PC-9 (cell line): ENCODE measurements at regions of chr14 and their contacts with region 1.

Region 1: GRCh38 chr14:78598041-78598920 is 428.1 kb downstream of the NRXN3 start:
- DNase-seq: peak in 1 of 2 experiments; percentile 29
- H3K4me3 ChIP-seq: no peak overlapping the region
- H3K27ac ChIP-seq: no peak overlapping the region
- H3K4me1 ChIP-seq: no peaks in the 10 kb centered on the region
- H3K27me3 ChIP-seq: no peaks in the 10 kb centered on the region
- CTCF ChIP-seq: peak; percentile 89

Region 2: GRCh38 chr14:78448164-78449094 is 149.9 kb before region 1 on chr14:
- CTCF ChIA-PET with region 1: no interaction called
- POLR2A ChIA-PET with region 1: no interaction called
- intact Hi-C with region 1: loop called (anchors 1 kb)
- DNase-seq: peak; percentile 25 to 37
- H3K4me3 ChIP-seq: no peak overlapping the region
- H3K27ac ChIP-seq: no peak overlapping the region
- H3K4me1 ChIP-seq: no peaks in the 10 kb centered on the region
- H3K27me3 ChIP-seq: no peaks in the 10 kb centered on the region
- CTCF ChIP-seq: peak; percentile 71

Region 3: DNA sequence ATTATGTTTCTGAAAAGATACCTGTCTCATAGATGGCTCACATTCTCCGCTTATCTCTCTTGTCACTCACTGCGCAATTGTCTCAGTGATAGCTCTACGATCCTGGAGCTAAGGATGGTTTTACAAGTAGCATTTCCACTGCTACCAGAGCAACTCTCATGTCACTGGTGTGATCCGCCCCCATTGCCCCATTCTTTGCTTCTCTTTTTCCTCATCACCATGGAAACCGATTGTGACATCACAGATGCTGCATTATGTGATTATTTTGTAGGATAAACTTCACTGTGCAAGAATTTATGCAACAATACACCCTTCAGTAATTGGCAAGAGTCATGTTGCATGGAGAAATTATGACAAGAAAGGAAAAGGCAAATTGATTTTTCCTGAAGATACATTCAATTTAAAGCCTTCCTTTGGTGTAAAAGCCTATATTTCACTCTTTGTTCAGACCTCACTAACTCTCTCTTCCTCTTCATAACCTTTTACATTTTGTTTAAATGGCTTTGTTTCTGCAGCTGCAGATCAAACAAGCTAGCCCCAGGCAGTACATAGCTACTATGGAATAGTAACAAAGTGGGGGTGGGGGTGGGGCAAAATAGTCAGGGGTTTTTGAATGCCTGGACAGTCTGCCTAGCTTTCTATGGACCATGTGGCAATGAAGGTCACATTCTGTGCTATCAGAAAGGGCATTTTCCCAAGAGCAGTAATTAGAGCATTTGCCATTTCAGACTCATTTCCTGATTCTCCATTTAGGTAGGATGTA is 111.7 kb after region 1 on chr14:
- CTCF ChIA-PET with region 1: no interaction called
- POLR2A ChIA-PET with region 1: no interaction called
- intact Hi-C with region 1: no loop called
- DNase-seq: no peak
- H3K4me3 ChIP-seq: no peak overlapping the region
- H3K27ac ChIP-seq: no peak overlapping the region
- H3K4me1 ChIP-seq: no peaks in the 10 kb centered on the region
- H3K27me3 ChIP-seq: no peaks in the 10 kb centered on the region
- CTCF ChIP-seq: no peak